Activated T-helper 1 cell treated with anti-CD3 and anti-CD28 coated beads, Interleukin-12 subunit alpha, Interleukin-12 subunit beta, Interleukin-2, Interleukin-4 antibody, amounts not matched to agents 30 ng/mL and 10 ng/mL and 1 ng/mL, durations not matched to agents 14 hours and 24 hours and 36 hours (primary cell): ENCODE measurements at regions of chr1 and their contacts with region 1.

Region 1: DNA sequence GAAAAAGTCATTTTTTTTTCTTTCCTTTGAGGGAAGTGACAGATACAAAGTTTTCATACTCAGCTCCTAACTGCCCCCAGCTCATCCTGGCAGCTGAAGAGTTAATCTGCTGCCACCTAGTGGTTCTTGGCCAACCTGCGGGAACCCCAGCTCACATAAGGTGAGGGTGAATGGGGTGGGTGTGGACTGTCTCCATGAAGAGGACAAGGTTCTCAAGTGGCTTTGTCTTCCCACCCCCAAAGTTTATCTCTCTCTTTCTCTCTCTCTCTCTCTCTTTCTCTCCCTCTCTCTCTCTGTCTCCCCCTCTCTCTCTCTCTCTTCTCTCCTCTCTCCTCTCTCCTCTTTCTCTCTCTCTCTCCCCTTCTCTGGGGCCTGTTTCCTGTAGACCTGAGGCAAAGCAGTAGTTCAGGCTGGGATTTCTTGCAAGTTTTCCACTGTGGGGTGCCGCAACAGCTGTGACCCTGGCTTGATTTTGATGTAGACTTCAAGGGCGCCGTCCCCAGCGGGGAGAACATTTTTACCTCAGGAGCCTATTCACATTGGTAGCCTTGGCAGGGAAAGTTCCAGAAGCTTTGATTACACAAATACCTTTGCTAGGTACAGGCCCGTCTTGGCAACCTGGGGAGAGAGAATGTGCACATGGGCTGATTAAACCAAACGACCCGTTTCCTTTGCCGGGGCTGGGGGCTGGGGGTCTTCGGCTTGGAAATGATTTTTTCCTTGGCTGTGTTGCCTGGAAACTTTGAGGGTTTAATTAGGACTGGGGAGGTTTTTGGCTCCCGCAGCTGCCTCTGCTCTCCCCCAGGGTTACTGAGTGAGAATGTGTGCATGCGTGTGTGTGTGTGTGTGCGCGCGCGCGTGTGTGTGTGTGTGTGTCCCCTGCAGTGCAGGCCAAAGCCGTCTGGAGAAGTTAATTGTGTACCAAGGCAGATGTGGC is 135.9 kb downstream of the TM2D1 start:
- DNase-seq: peak; percentile 37
- H3K4me3 Mint-ChIP-seq: no peak overlapping the region
- H3K27ac Mint-ChIP-seq: no peak overlapping the region
- H3K4me1 Mint-ChIP-seq: no peaks in the 10 kb centered on the region
- H3K27me3 Mint-ChIP-seq: peaks cover 18% of the 10 kb centered on the region

Region 2: GRCh38 chr1:60848583-60849188 is 740.3 kb before region 1 on chr1:
- intact Hi-C with region 1: loop called (anchors 2 kb)
- DNase-seq: no peak
- H3K4me3 Mint-ChIP-seq: no peak overlapping the region
- H3K27ac Mint-ChIP-seq: no peak overlapping the region
- H3K4me1 Mint-ChIP-seq: no peaks in the 10 kb centered on the region
- H3K27me3 Mint-ChIP-seq: peaks cover 9% of the 10 kb centered on the region

Region 3: DNA sequence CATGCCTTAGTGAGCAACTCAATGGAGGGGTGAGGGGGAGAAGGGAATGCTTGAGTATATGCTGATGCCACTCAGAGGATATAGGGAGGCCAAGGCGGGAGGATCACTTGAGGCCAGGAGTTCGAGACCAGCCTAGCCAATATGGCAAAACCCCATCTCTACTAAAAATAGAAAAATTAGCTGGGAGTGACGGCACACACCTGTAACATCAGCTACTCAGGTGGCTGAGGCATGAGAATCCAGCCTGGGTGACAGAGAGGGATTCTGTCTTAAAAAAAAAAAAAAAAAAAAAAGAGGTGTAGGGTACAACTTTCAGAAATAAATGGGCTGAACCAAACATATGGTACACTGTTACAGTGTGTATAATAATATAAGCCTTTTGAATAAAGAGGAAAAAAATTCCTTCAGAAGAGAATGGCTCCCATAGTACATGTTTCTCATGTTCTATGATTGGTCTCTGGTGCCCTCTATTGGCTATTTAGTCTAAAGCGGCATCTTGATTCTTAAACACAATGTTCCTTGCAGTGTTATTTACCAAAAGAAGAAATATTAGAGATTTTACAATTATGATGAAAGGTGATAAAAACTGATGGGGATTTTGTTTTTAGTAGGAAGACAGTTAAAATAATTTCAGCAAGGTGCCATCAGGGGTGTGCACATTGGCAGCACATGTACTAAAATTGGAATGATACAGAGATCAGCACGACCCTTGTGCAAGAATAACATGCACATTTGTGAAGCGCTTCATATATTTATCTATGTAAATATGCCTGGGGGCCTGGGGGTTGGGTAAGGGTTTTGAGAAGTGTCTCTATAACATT is 263.1 kb after region 1 on chr1:
- intact Hi-C with region 1: loop called (anchors 1 kb)
- DNase-seq: no peak
- H3K4me3 Mint-ChIP-seq: no peak overlapping the region
- H3K27ac Mint-ChIP-seq: no peak overlapping the region
- H3K4me1 Mint-ChIP-seq: no peaks in the 10 kb centered on the region
- H3K27me3 Mint-ChIP-seq: no peaks in the 10 kb centered on the region